HEK293 (cell line): ENCODE measurements at regions of chr12 and their contacts with region 1.

Region 1: GRCh38 chr12:113184900-113185773 is at the starts of genes DDX54 and RITA1:
- H3K4me3 ChIP-seq: peak within 1 kb of the TSS; percentile 99
- H3K27ac ChIP-seq: peak within 1 kb of the TSS; percentile 94
- H3K4me1 ChIP-seq: peaks cover 3% of the 10 kb centered on the region; the same call in 1 of the 2 replicates
- CTCF ChIP-seq: no peak

Region 2: DNA sequence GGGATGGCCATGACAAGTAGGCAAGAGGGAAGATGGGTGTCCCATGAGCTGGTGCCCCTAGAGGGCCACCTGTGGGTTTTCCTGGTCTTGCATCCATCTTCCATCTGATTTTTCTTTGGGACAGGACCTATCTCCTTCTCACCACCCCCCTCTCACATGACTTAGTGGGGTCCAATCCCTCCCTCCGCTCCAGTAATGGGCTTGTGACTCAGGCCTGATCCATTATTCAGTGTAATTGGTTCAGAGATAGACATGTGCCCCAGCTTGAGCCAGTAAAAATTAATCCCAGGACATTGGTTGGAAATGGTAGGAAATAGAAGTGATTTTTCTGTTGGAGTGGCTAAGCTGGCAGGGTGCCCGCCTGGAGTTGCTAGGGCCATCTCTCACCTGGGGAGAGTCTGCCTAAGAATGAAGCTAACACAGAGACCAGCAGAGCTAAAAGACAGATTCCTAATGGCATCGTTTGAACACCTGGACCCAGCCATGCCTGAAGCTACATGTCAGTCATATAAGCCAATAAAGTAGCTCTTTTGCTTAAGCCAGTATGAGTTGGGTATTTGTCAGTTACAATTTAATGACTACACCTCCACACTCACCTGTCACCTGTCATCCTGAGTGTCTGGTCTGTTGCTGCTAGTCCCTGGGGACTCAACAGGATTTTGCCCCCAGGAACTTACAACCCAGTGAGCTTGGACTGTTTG is 64.3 kb before region 1 on chr12:
- CTCF ChIA-PET with region 1: no interaction called
- POLR2A ChIA-PET with region 1: no interaction called
- H3K4me3 ChIP-seq: no peak overlapping the region
- H3K27ac ChIP-seq: no peak overlapping the region
- H3K4me1 ChIP-seq: no peaks in the 10 kb centered on the region
- CTCF ChIP-seq: no peak

Region 3: DNA sequence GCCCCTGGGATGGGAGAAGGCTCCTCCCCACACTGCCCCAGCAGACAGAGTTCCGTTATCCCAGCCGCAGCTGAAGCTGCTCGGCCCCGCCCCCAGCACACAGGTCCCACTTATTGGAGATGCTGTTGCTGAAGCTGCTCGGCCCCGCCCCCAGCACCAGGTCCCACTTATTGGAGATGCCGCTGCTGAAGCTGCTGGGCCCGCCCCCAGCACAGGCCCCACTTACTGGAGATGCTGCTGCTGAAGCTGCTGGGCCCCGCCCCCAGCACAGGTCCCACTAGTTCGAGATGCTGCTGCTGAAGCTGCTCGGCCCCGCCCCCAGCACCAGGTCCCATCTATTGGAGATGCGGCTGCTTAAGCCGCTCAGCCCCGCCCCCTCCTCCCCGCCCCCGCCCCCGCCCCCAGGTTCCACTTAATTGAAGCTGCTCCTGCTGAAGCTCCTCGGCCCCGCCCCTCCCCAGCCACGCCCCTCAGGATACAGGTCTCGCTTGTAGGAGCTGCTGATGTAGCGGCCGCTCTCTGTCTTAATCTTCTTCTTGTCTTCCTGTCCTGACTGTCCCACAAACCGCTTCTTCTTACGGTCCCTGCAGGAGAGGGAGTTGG is 23.6 kb before region 1 on chr12:
- CTCF ChIA-PET with region 1: no interaction called
- POLR2A ChIA-PET with region 1: interaction called, 10 read pairs
- H3K4me3 ChIP-seq: no peak overlapping the region
- H3K27ac ChIP-seq: no peak overlapping the region
- H3K4me1 ChIP-seq: no peaks in the 10 kb centered on the region; the same call in 1 of the 2 replicates
- CTCF ChIP-seq: no peak

Region 4: GRCh38 chr12:113221181-113221997 is 36.3 kb after region 1 on chr12 and contains the start of gene TPCN1:
- CTCF ChIA-PET with region 1: interaction called, 3 read pairs
- POLR2A ChIA-PET with region 1: interaction called, 12 read pairs
- H3K4me3 ChIP-seq: peak within 1 kb of the TSS; percentile 70
- H3K27ac ChIP-seq: peak within 1 kb of the TSS; percentile 33; the same call in 1 of the 2 replicates
- H3K4me1 ChIP-seq: no peaks in the 10 kb centered on the region
- CTCF ChIP-seq: peak; percentile 57; the same call in 1 of the 2 replicates

Region 5: GRCh38 chr12:113285679-113286610 is 100.8 kb after region 1 on chr12:
- CTCF ChIA-PET with region 1: no interaction called
- POLR2A ChIA-PET with region 1: no interaction called
- H3K4me3 ChIP-seq: no peak overlapping the region
- H3K27ac ChIP-seq: no peak overlapping the region
- H3K4me1 ChIP-seq: no peaks in the 10 kb centered on the region
- CTCF ChIP-seq: no peak